Activated B cell treated with CpG ODN at 0.5 μM for 24 hours (primary cell): ENCODE measurements at regions of chr5 and their contacts with region 1.

Region 1: GRCh38 chr5:140244525-140245025 is 58.3 kb downstream of the PFDN1 start:
- DNase-seq: peak; percentile 60
- ATAC-seq: peak; percentile 74
- H3K4me3 Mint-ChIP-seq: no peak overlapping the region
- H3K27ac Mint-ChIP-seq: no peak overlapping the region
- H3K4me1 Mint-ChIP-seq: peaks cover 19% of the 10 kb centered on the region
- H3K27me3 Mint-ChIP-seq: no peaks in the 10 kb centered on the region
- CTCF ChIP-seq: peak; percentile 75

Region 2: GRCh38 chr5:140284013-140284412 is 39.4 kb after region 1 on chr5:
- CTCF ChIA-PET with region 1: no interaction called
- POLR2A ChIA-PET with region 1: no interaction called
- intact Hi-C with region 1: loop called (anchors 5 kb)
- DNase-seq: no peak
- ATAC-seq: no peak
- H3K4me3 Mint-ChIP-seq: peak overlapping the region; percentile 79
- H3K27ac Mint-ChIP-seq: peak overlapping the region; percentile 85
- H3K4me1 Mint-ChIP-seq: peaks cover 27% of the 10 kb centered on the region
- H3K27me3 Mint-ChIP-seq: no peaks in the 10 kb centered on the region
- CTCF ChIP-seq: no peak

Region 3: DNA sequence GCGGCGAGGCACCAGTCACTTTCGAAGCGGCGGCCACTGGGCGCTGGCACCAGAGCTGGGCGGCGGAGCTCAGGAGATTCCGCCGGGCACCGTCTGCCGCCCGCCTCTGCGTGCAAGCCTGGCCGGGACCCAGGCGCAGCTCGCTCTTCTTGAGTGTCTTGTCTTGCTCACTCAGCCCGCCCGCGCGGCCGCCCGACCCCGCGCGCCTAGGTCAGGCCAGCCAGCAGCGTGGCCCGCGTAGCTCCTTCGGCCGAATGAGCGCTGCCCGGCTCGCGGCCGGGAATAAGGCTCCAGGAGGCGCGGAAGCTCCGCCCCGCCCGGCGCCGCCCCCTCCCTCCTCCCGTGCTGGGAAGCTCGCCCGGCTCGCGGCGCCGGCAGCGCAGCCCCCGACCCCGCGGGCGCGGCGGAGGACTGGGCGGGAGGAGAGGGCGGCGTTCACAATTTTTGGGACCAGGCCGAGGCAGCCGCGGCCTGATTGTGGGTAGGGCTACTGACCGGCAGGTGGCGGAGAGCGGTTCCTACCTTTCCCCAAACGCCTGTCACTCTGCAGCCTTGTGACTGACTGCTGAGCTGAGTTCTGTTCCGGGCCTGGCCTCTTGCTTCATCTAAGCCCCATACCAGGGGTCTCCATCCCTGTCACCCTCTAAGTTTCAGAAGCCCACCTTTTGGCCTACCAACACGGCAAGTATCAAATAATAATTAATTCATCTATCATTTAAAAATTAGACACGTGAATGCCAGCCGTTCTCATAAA is 102.0 kb after region 1 on chr5 and contains the start of gene HBEGF:
- CTCF ChIA-PET with region 1: interaction called, 347 read pairs
- POLR2A ChIA-PET with region 1: interaction called, 6 read pairs
- intact Hi-C with region 1: loop called (anchors 1 kb)
- DNase-seq: peak; percentile 58
- ATAC-seq: peak; percentile 80
- H3K4me3 Mint-ChIP-seq: peak within 1 kb of the TSS; percentile 78
- H3K27ac Mint-ChIP-seq: no peak within 1 kb of the TSS
- H3K4me1 Mint-ChIP-seq: peaks cover 51% of the 10 kb centered on the region
- H3K27me3 Mint-ChIP-seq: peaks cover 1% of the 10 kb centered on the region
- CTCF ChIP-seq: no peak
- total RNA-seq, gene HBEGF: 0.22 and 0.49 TPM in 2 replicates

Region 4: DNA sequence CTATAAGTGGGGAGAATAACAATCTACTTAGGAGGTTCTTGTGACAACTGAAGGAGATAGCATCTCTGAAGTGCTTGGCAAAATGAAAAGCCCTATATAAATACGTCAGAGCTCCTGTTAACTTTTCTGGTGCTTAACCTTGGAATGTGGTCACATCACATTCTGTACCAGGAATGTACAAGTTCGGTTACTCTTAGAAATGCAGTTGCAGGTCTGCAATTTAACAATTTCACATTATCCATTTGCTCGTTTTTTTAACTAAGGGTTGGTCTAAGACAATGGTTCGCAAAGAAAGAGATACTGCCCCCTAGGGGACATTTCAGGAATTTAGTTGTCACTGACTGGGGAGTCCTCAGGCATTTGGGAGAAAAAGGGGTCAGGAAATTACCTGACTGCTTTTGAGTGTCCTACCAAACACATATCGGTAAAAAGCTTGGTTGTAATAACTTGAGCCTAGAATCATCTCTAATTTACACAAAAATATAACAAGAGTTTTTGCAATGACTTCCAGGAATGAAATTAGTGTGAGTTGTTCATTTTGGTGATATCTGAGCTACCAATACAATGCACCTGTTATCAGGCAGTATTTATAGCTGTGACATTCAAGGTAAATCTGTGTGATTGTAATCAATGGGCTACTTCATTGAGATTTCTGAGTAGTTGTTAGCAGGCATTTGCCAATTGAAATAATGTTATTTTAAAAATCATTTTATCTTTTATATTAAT is 107.2 kb after region 1 on chr5:
- CTCF ChIA-PET with region 1: interaction called, 347 read pairs
- POLR2A ChIA-PET with region 1: interaction called, 6 read pairs
- intact Hi-C with region 1: loop called (anchors 1 kb)
- DNase-seq: no peak
- ATAC-seq: peak; percentile 74
- H3K4me3 Mint-ChIP-seq: no peak overlapping the region
- H3K27ac Mint-ChIP-seq: no peak overlapping the region
- H3K4me1 Mint-ChIP-seq: peaks cover 21% of the 10 kb centered on the region
- H3K27me3 Mint-ChIP-seq: peaks cover 5% of the 10 kb centered on the region
- CTCF ChIP-seq: peak; percentile 62

Region 5: GRCh38 chr5:140357726-140358093 is 113.1 kb after region 1 on chr5:
- CTCF ChIA-PET with region 1: interaction called, 347 read pairs
- POLR2A ChIA-PET with region 1: no interaction called
- intact Hi-C with region 1: loop called (anchors 2 kb)
- DNase-seq: peak; percentile 60
- ATAC-seq: peak; percentile 99
- H3K4me3 Mint-ChIP-seq: peak overlapping the region; percentile 44
- H3K27ac Mint-ChIP-seq: no peak overlapping the region
- H3K4me1 Mint-ChIP-seq: peaks cover 9% of the 10 kb centered on the region
- H3K27me3 Mint-ChIP-seq: peaks cover 3% of the 10 kb centered on the region
- CTCF ChIP-seq: no peak

Region 6: DNA sequence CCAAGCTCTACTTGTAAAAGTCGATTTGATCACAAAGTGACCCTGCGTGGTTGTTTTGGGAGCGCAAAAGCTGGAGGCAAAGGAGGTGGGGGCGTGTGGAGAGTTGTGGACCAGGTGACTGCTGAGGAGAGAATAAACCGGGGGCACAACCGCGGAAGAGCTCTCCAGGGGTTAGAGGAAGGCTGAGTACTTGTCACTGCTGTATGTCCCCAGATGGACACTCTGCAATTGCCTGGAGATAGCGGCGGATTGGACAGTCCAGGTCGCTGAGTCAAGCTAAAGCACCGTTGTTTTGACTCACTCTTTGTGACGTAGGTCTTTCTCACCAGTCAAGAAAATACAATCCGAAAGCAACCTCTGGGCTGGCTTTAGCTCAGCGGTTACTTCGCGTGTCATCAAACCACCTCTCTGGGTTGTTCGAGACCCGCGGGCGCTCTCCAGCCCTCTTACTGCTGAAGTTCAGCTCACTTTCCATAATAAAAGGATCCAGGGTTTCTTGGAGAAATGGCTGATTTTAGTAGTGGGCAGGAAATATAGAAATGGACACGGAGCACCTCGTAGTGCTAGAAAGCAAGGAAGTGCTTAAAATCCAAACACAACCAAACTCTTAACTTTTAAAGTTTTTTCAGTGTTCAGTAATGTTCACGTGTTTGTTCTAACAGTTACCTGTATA is 481.4 kb after region 1 on chr5:
- CTCF ChIA-PET with region 1: interaction called, 5 read pairs
- POLR2A ChIA-PET with region 1: no interaction called
- intact Hi-C with region 1: loop called (anchors 2 kb)
- DNase-seq: no peak
- ATAC-seq: peak; percentile 70
- H3K4me3 Mint-ChIP-seq: no peak overlapping the region
- H3K27ac Mint-ChIP-seq: no peak overlapping the region
- H3K4me1 Mint-ChIP-seq: peaks cover 8% of the 10 kb centered on the region
- H3K27me3 Mint-ChIP-seq: peaks cover 36% of the 10 kb centered on the region
- CTCF ChIP-seq: no peak

Region 7: GRCh38 chr5:140966293-140967225 is 722.0 kb after region 1 on chr5 and contains the start of gene PCDHAC2:
- CTCF ChIA-PET with region 1: no interaction called
- POLR2A ChIA-PET with region 1: no interaction called
- intact Hi-C with region 1: no loop called
- DNase-seq: no peak
- ATAC-seq: no peak
- H3K4me3 Mint-ChIP-seq: no peak within 1 kb of the TSS
- H3K27ac Mint-ChIP-seq: no peak within 1 kb of the TSS
- H3K4me1 Mint-ChIP-seq: no peaks in the 10 kb centered on the region
- H3K27me3 Mint-ChIP-seq: peaks cover 24% of the 10 kb centered on the region
- CTCF ChIP-seq: no peak
- total RNA-seq, gene PCDHAC2: not detected in 2 replicates